H1 (cell line): ENCODE measurements at regions of chr16 and their contacts with region 1.

Region 1: DNA sequence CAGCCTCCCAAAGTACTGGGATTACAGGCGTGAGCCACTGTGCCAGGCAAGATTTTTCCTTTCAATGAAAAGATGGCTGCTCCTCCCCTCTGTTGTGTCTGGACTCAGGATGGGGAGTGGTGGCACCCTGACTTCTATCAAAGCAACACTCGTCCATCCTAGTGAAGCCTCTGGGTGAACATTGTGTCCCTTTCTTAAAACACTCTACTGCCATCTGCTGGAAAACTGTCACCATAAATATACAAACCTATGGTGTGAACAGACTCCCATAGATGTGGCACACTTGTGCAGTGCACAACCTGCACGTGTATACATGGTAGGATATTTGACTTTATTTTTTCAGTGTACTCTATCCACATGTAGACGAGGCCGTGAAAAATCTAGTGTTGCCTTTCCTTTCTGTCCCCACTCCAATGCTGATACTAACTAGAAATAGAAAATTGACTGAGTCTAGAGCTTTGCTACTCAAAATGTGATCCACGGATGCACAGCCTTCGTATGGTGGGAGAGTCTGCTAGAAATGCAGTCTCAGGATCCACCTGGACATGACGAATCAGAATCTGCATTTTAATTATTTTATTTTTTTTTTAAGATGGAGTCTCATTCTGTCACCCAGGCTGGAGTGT is 55.9 kb upstream of the PLCG2 start:
- DNase-seq: no peak
- H3K4me3 ChIP-seq: no peak overlapping the region
- H3K27ac ChIP-seq: no peak overlapping the region
- H3K4me1 ChIP-seq: no peaks in the 10 kb centered on the region; a peak in 2 of 7 replicates
- H3K27me3 ChIP-seq: no peaks in the 10 kb centered on the region
- CTCF ChIP-seq: peak in 2 of 3 experiments; percentile 73 to 74; a peak in 3 of 4 replicates
- EP300 ChIP-seq: no peak
- POLR2A ChIP-seq: no peak
- RAD21 ChIP-seq: peak; percentile 90 to 92

Region 2: GRCh38 chr16:81366316-81366932 is 356.8 kb before region 1 on chr16:
- CTCF ChIA-PET with region 1: interaction called, 17 read pairs
- POLR2A ChIA-PET with region 1: no interaction called
- DNase-seq: no peak
- H3K4me3 ChIP-seq: no peak overlapping the region
- H3K27ac ChIP-seq: no peak overlapping the region
- H3K4me1 ChIP-seq: no peaks in the 10 kb centered on the region
- H3K27me3 ChIP-seq: no peaks in the 10 kb centered on the region
- CTCF ChIP-seq: peak in 2 of 3 experiments; percentile 43 to 56; a peak in 2 of 4 replicates
- EP300 ChIP-seq: no peak
- POLR2A ChIP-seq: no peak
- RAD21 ChIP-seq: peak; percentile 78 to 83

Region 3: GRCh38 chr16:81403616-81404373 is 319.4 kb before region 1 on chr16:
- CTCF ChIA-PET with region 1: interaction called, 24 read pairs
- POLR2A ChIA-PET with region 1: no interaction called
- DNase-seq: peak; percentile 53 to 97
- H3K4me3 ChIP-seq: peak overlapping the region in 2 of 4 experiments; percentile 19 to 49; a peak in 4 of 8 replicates
- H3K27ac ChIP-seq: no peak overlapping the region
- H3K4me1 ChIP-seq: peaks cover 0 to 5% (median 2%) of the 10 kb centered on the region in 4 experiments; a peak in 4 of 7 replicates
- H3K27me3 ChIP-seq: no peaks in the 10 kb centered on the region; a peak in 2 of 7 replicates
- CTCF ChIP-seq: peak; percentile 92 to 95 (median 93)
- EP300 ChIP-seq: no peak
- POLR2A ChIP-seq: no peak
- RAD21 ChIP-seq: peak; percentile 98 to 99

Region 4: DNA sequence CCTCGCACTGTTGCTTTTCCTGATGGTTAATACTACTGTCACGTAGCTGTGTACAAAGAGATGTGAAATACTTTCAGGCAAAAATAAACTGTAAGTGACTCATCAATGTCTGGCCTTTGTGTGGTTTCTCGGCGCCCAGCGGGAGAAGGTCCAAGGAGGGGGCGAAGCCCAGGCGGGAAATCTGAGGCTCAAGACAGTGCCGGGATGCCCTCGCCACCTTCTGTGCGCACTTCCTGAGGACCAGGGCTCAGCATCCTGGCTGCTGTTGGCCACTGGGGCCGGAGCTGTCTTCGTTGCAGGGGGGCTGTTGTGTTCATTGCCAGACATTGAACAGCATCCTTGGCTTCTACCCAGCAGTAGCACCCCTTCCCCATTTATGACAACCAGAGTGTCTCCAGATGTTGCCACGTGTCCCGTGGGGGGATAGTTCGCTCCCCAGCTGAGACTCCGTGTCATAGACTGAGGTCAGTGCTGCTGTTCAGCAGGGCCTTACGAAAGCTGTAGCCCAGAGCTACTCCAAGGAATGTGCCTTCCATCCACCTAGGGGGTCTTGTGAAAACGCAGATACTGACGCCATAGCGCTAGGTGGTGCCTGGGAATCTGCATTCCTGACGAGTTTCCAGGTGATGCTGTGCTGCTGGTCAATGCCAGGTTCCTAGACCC is 11.4 kb before region 1 on chr16:
- CTCF ChIA-PET with region 1: interaction called, 48 read pairs
- POLR2A ChIA-PET with region 1: no interaction called
- DNase-seq: no peak
- H3K4me3 ChIP-seq: no peak overlapping the region
- H3K27ac ChIP-seq: no peak overlapping the region
- H3K4me1 ChIP-seq: peaks cover 0 to 41% (median 26%) of the 10 kb centered on the region in 4 experiments; a peak in 6 of 7 replicates
- H3K27me3 ChIP-seq: no peaks in the 10 kb centered on the region
- CTCF ChIP-seq: no peak
- EP300 ChIP-seq: no peak
- POLR2A ChIP-seq: no peak
- RAD21 ChIP-seq: no peak; a peak in 1 of 4 replicates

Region 5: GRCh38 chr16:81737885-81738786 is 14.9 kb after region 1 on chr16:
- CTCF ChIA-PET with region 1: interaction called, 29 read pairs
- POLR2A ChIA-PET with region 1: no interaction called
- DNase-seq: peak; percentile 73 to 92
- H3K4me3 ChIP-seq: 0 out of 8 replicates have a peak overlapping the region, but pooled peaks of 1 of the 4 experiments have one; percentile 30
- H3K27ac ChIP-seq: no peak overlapping the region
- H3K4me1 ChIP-seq: peaks cover 0 to 2% (median 0%) of the 10 kb centered on the region in 4 experiments; a peak in 3 of 7 replicates
- H3K27me3 ChIP-seq: no peaks in the 10 kb centered on the region
- CTCF ChIP-seq: peak; percentile 88 to 95 (median 89)
- EP300 ChIP-seq: peak in 1 of 2 experiments; percentile 71; a peak in 1 of 3 replicates
- POLR2A ChIP-seq: no peak
- RAD21 ChIP-seq: peak; percentile 96 to 98